RWPE1 (cell line): ENCODE measurements at regions of chr20 and their contacts with region 1.

Region 1: GRCh38 chr20:62302341-62303058 is at the start of gene ADRM1:
- DNase-seq: peak; percentile 100
- H3K27ac ChIP-seq: peak within 1 kb of the TSS; percentile 96
- CTCF ChIP-seq: peak; percentile 98

Region 2: DNA sequence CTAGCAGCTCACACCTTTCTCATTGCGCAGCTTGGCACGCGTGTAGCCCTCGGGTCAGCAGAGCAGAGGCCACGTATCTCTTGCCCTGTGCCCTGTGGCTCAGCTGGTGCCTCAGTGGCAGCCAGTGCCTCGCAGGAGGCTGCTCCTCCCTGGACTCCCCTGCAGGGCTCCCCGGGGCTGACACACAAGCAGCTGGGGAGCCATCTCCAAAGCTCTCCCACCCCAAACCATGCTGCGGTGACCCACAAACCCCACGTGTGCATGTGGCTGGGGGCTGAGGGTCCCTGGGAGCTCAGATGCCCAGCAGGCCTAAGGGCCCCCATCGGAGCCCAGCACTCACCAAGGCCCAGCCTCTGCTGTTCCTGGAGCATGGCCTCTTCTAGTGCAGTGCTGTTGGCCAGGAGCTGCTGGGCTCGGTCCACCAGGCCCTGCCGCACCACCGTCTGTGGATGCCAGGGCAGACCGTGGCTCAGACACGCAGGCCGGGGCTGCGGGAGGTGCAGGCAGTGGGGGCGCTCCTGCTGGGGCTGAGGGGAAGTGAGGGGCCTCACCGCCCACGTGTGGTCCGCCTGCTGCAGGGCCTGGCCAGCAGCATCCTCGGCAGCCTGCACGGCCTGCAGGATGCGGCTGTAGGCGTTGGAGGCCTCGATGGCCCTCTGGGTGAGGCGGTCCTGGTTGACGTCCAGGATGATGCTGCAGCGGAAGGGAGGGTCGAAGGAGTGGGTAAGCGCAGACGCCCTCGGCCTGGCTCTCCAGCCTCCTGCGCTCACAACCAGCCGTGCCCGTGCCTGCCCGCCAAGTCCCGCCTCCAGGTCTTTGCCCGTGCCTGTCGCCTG is 14.0 kb after region 1 on chr20:
- CTCF ChIA-PET with region 1: interaction called, 14 read pairs
- POLR2A ChIA-PET with region 1: interaction called, 5 read pairs
- DNase-seq: no peak
- H3K27ac ChIP-seq: peak overlapping the region; percentile 87
- CTCF ChIP-seq: no peak

Region 3: DNA sequence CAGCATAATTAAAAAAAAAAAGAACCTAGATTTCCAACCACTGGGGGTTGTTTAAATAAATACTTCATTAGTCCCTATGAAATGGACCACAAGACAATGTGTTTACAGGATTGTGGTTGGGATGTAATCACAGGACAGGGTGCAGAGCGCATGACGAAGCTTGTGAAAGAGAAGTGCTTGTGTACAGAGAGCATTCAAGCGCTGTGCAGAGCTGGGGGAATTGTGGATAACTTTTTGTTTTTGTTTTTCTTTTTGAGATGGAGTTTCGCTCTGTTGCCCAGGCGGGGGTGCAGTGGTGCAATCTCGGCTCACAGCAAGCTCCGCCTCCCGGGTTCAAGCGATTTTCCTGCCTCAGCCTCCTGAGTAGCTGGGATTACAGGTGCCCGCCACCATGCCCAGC is 42.3 kb after region 1 on chr20:
- CTCF ChIA-PET with region 1: no interaction called
- POLR2A ChIA-PET with region 1: no interaction called
- DNase-seq: no peak
- H3K27ac ChIP-seq: peak overlapping the region; percentile 61
- CTCF ChIP-seq: no peak

Region 4: GRCh38 chr20:62368976-62369814 is 66.7 kb after region 1 on chr20:
- CTCF ChIA-PET with region 1: interaction called, 10 read pairs
- POLR2A ChIA-PET with region 1: interaction called, 16 read pairs
- DNase-seq: peak; percentile 84
- H3K27ac ChIP-seq: peak overlapping the region; percentile 100
- CTCF ChIP-seq: peak; percentile 59